Heart right ventricle (tissue), 16 donors: ENCODE measurements at regions of chr7 and their contacts with region 1.

Region 1: DNA sequence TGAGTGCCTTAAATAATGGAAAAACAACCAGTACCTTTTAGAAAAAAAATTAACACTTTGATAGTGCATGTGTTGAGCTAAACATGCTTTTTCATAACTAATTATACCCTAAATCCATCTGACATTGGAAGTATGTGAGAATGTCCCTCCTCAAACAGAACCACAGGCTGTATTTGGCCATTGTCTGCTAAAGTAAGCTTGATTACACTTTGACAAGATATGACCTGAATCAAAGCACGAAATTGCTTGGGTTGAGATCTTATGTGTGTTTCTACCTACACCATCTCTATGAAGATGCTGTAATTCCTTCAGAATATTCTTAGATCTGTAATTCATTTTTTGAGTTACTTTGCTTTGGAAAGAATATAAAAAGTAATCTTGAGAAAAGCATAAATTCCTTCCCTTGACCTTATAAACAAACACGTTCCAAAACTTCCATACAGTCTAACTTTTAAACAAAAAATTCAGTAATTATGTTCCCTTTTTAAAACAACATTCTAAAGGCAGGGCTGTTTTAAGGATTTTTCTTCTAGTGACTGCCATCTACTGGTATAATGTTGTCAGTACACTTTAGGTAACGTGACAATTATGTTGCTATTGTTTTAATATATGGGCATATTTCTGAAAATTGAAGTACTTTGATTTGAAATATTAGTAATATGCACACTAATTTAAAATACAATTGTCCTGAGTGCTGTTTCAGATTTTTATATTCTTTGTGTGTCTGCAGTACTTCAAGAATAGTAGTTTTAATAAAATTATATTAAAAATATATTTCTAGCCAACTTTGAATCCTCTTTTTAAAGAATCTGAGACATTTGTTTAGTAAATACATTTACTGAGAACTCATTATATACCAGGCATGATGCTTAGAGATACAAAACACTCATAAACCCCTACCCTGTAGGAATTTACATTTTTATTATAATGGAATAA is 20.9 kb downstream of the CD36 start:
- DNase-seq: no peak
- ATAC-seq: peak in 5 of 8 donors; percentile 30 to 54 (median 40)
- H3K4me3 ChIP-seq: no peak overlapping the region
- H3K27ac ChIP-seq: peak overlapping the region in 9 of 10 donors; percentile 22 to 79 (median 51)
- H3K4me1 ChIP-seq: peaks cover 5 to 98% (median 50%) of the 10 kb centered on the region in 9 donors
- H3K27me3 ChIP-seq: no peaks in the 10 kb centered on the region
- CTCF ChIP-seq: peak; percentile 32 to 87 (median 68)

Region 2: GRCh38 chr7:80428161-80429054 is 231.0 kb before region 1 on chr7:
- intact Hi-C with region 1: loop called in 9 of 10 experiments (anchors 2 to 10 kb)
- DNase-seq: peak in 1 of 2 donors; percentile 47
- ATAC-seq: peak; percentile 65 to 95 (median 92)
- H3K4me3 ChIP-seq: peak overlapping the region in 2 of 10 donors; percentile 0 to 22
- H3K27ac ChIP-seq: no peak overlapping the region
- H3K4me1 ChIP-seq: peaks cover 0 to 10% (median 3%) of the 10 kb centered on the region in 9 donors
- H3K27me3 ChIP-seq: no peaks in the 10 kb centered on the region
- CTCF ChIP-seq: peak; percentile 44 to 90 (median 77)

Region 3: GRCh38 chr7:80467069-80467468 is 192.3 kb before region 1 on chr7:
- intact Hi-C with region 1: loop called in 1 of 10 experiments (anchors 10 kb)
- DNase-seq: no peak
- ATAC-seq: peak in 7 of 8 donors; percentile 25 to 91 (median 81)
- H3K4me3 ChIP-seq: peak overlapping the region in 1 of 10 donors; percentile 0
- H3K27ac ChIP-seq: peak overlapping the region in 7 of 10 donors; percentile 18 to 54 (median 32)
- H3K4me1 ChIP-seq: peaks cover 0 to 30% (median 15%) of the 10 kb centered on the region in 9 donors
- H3K27me3 ChIP-seq: no peaks in the 10 kb centered on the region
- CTCF ChIP-seq: no peak

Region 4: GRCh38 chr7:80552304-80552703 is 107.1 kb before region 1 on chr7:
- intact Hi-C with region 1: loop called in 1 of 10 experiments (anchors 5 kb)
- DNase-seq: no peak
- ATAC-seq: no peak
- H3K4me3 ChIP-seq: no peak overlapping the region
- H3K27ac ChIP-seq: peak overlapping the region in 8 of 10 donors; percentile 30 to 78 (median 46)
- H3K4me1 ChIP-seq: peaks cover 2 to 48% (median 41%) of the 10 kb centered on the region in 9 donors
- H3K27me3 ChIP-seq: no peaks in the 10 kb centered on the region
- CTCF ChIP-seq: no peak

Region 5: DNA sequence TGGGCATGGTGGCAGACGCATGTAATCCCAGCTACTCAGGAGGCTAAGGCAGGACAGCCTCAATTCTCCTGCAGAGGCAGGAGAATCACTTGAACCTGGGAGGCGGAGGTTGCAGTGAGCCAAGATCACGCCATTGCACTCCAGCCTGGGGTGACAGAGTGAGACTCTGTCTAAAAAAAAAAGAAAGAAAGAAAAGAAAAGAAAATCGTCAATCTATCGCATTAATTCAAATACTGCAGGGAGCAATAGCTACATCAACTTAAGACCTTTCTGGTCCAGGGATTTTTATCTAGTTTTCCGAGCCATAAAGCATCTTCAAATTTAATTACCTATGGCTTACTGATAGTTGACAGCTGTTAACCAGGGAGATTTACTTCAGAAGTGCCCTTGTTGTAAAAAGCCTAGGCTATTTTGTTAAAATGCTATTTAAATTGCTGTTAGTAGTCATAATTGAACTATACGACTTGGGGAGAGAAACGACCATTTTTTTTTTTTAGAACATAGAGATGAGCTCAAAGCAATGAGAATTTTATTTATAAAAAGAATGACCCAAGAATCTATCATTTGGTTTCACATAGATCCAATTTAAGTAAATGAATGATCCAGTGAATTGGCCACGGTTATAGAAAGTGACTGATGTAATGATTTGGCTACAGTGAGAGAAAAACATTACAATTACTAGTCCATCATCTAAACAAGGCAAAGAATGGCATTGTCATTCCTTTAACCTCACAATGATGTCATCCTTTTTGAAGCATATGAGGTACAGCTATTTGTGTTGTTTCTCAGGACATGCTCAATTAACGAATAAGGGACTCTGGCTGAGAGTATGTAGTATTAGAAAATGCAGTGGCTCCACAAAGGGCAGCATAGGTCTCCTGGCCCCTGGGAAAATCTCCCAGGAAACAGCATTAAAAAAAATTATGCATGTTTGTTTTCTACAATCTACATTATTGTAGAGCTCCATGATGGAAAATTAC is 174.2 kb after region 1 on chr7:
- intact Hi-C with region 1: no loop called
- DNase-seq: no peak
- ATAC-seq: peak in 1 of 8 donors; percentile 27
- H3K4me3 ChIP-seq: no peak overlapping the region
- H3K27ac ChIP-seq: no peak overlapping the region
- H3K4me1 ChIP-seq: peaks cover 0 to 39% (median 6%) of the 10 kb centered on the region in 9 donors
- H3K27me3 ChIP-seq: no peaks in the 10 kb centered on the region
- CTCF ChIP-seq: no peak